IMR-90 (cell line): ENCODE measurements at regions of chr3 and their contacts with region 1.

Region 1: GRCh38 chr3:151003029-151003763 is 30.7 kb upstream of the CLRN1 start:
- DNase-seq: peak; percentile 46
- ATAC-seq: peak; percentile 32; the same call in 1 of the 2 replicates
- H3K4me3 ChIP-seq: no peak overlapping the region
- H3K27ac ChIP-seq: no peak overlapping the region
- H3K4me1 ChIP-seq: peaks cover 4% of the 10 kb centered on the region
- H3K27me3 ChIP-seq: peaks cover 8% of the 10 kb centered on the region
- CTCF ChIP-seq: no peak
- POLR2A ChIP-seq: no peak
- RAD21 ChIP-seq: no peak

Region 2: DNA sequence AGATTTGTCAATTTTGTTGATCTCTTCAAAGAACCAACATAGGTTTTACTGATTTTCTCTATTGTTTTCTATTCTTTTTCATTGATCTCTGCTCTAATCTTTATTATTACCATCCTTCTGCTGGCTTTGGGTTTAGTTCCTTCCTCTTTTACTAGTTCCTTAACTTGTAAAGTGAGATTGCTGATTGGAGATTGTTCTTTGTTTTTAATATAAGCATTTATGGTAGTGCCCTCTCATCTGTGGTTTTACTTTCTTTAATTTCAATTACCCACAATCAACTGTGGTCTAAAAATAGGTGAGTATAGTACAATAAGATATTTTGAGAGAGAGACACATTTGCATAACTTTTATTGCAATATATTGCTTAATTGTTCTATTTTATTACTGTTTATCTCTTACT is 17.5 kb before region 1 on chr3:
- CTCF ChIA-PET with region 1: no interaction called
- POLR2A ChIA-PET with region 1: no interaction called
- dilution Hi-C with region 1: no loop called
- in situ Hi-C with region 1: no loop called
- intact Hi-C with region 1: loop called (anchors 1 kb)
- DNase-seq: no peak
- ATAC-seq: no peak
- H3K4me3 ChIP-seq: no peak overlapping the region
- H3K27ac ChIP-seq: no peak overlapping the region
- H3K4me1 ChIP-seq: no peaks in the 10 kb centered on the region
- H3K27me3 ChIP-seq: no peaks in the 10 kb centered on the region; the same call in 1 of the 2 replicates
- CTCF ChIP-seq: no peak
- POLR2A ChIP-seq: no peak
- RAD21 ChIP-seq: no peak